ENCODE measurements at regions of chr20 and their contacts with region 1.

Region 1: GRCh38 chr20:31822421-31823330 is 3.5 kb downstream of the MYLK2 start:
- DNase-seq: peak; percentile 82
- ATAC-seq: peak; percentile 86
- H3K4me3 Mint-ChIP-seq: no peak overlapping the region
- H3K27ac Mint-ChIP-seq: no peak overlapping the region
- H3K4me1 Mint-ChIP-seq: peaks cover 16% of the 10 kb centered on the region
- H3K27me3 Mint-ChIP-seq: no peaks in the 10 kb centered on the region

Region 2: DNA sequence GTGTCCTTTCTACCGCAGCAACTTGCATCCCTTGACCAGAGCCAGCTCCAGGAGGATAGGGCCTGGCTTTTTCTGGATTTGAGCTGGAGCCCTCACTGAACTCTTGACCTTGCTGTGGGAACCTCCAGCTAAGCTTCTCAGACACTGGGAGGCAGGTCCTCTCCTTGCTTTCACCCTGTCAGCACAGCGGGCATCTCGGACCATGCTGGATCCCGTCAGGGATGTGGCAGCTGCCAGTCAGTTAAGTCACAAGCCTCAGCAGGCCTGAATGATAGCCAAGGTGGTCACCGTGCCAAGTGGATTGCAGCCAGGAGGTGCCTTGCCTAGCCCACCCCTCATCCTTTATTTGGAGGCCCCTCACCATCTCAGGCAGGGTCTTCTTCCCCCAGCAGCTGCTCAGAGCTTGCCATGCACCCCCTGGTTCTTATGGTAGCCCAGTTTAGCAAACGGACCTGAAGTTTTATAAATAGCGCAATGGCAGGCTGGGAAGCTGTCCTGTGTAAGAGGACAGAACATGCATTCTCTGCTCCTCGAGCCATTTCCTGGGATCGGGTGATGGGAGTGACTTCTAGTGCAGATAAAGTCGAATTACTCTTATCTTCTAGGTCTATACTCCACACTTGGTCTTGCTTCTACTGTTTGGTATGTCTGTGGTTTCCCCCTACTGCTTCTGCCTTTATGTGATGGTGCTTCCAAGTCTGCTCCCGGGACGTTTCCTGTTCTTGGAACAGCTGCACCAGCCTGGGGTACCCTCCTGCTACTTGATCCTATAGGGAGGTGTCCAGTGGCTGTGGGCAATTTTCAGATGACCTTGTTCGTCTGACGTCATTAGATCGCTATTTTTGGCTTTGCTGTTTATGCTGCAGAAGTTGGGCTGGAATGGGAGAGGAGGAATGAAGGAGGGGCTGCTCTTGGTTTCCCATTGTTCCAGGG is 10.6 kb before region 1 on chr20:
- CTCF ChIA-PET with region 1: interaction called, 25 read pairs
- POLR2A ChIA-PET with region 1: no interaction called
- DNase-seq: no peak
- ATAC-seq: no peak
- H3K4me3 Mint-ChIP-seq: no peak overlapping the region
- H3K27ac Mint-ChIP-seq: no peak overlapping the region
- H3K4me1 Mint-ChIP-seq: peaks cover 3% of the 10 kb centered on the region
- H3K27me3 Mint-ChIP-seq: no peaks in the 10 kb centered on the region

Region 3: DNA sequence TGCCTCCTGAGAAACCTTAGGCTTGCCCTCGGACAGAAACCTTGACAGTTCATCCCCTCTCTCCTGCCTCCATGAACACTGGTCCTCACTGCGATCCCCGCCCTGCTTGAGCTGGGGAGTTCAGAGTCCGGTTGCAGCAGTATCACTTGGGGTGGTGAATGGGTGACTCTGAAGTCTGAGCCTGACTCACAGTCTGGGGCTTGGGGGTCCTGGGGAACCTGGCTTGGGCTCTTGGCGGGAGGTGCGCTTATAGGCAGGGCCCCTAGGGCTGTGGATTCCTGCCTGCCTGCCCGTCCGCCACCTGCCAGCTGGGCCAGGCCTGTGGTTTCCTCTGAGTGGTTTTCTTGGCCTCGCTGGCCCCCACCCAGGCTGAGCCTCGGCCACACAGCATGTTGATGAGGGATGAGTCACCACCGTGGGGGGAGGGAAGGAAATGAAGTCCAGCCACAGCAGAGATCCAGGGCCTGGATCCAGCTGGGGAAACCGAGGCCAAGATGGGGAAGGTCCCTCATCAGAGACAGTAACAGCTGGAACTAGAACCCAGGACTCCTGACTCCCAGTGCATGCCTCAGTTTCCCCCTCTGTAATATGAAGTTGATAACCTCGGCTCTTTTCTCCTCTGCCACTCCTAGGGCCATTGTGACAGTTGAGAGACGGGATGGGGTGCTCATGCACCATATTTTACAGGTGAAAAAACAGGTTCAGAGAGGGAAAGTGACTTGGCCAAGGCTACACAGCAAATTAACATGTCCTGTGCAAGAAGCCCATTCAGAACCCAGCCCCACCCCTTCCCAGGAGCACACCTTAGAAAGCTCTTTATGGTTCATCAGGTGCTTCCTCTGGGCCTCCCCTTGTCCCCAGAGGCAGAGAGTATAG is 13.5 kb after region 1 on chr20:
- CTCF ChIA-PET with region 1: interaction called, 13 read pairs
- POLR2A ChIA-PET with region 1: no interaction called
- DNase-seq: peak; percentile 65
- ATAC-seq: peak; percentile 54
- H3K4me3 Mint-ChIP-seq: no peak overlapping the region
- H3K27ac Mint-ChIP-seq: no peak overlapping the region
- H3K4me1 Mint-ChIP-seq: peaks cover 23% of the 10 kb centered on the region
- H3K27me3 Mint-ChIP-seq: no peaks in the 10 kb centered on the region

Region 4: DNA sequence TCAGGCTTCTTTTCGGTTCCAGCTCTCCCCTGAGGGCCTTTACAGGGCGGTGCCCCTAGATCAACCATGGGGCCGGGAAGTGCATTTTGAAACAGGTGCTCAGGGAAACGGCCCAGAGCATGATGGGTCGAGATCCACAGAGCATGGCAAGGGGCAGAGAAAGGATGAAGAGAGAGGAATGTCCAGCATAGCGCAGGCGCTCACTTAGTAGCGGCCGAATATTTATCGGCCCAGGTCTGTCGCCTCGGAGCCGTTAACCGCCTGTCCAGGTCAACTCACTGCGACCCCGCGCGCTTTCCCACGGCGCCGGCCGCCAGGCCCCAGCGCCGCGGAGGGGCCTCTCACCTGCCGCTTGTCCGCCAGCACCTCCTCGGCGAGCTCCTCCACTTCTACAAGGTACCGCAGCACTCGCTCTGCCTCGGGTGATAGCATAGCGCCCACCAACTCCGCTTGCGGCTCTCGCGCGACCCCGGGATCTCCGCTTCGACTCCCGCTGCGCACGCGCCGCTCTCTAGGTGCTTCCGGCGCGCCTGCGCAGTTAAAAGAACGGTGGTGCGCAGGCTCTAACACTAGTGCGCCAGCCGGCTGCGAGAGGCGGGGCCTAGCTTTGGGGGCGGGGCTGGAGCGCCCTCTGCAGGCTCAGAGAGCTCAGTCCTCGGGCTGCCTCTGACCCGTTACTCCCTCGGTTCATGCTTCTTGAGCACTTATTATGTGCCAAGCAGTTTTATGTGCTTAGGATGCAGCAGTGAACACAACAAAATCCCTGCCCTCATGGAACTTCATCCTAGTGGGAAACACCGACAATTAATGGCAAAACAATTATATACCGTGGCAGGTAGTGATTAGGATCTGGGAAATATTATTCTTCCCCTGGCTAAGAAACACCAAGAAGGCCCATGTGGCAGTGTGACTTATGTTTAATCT is 129.1 kb after region 1 on chr20 and contains the start of gene PDRG1:
- CTCF ChIA-PET with region 1: interaction called, 22 read pairs
- POLR2A ChIA-PET with region 1: no interaction called
- DNase-seq: peak; percentile 98
- ATAC-seq: peak; percentile 97
- H3K4me3 Mint-ChIP-seq: peak within 1 kb of the TSS; percentile 98
- H3K27ac Mint-ChIP-seq: peak within 1 kb of the TSS; percentile 96
- H3K4me1 Mint-ChIP-seq: peaks cover 30% of the 10 kb centered on the region
- H3K27me3 Mint-ChIP-seq: peaks cover 8% of the 10 kb centered on the region
- total RNA-seq, gene PDRG1: 15.0 to 16.1 TPM